WTC11 (cell line): ENCODE measurements at regions of chr15 and their contacts with region 1.

Region 1: GRCh38 chr15:98568382-98569017 is 79.8 kb upstream of the IGF1R start:
- DNase-seq: no peak
- ATAC-seq: no peak
- H3K4me3 Mint-ChIP-seq: no peak overlapping the region
- H3K27ac Mint-ChIP-seq: no peak overlapping the region
- H3K4me1 Mint-ChIP-seq: no peaks in the 10 kb centered on the region
- H3K27me3 Mint-ChIP-seq: no peaks in the 10 kb centered on the region
- CTCF ChIP-seq: no peak

Region 2: GRCh38 chr15:98548154-98548971 is 20.1 kb before region 1 on chr15:
- CTCF ChIA-PET with region 1: interaction called, 10 read pairs
- POLR2A ChIA-PET with region 1: no interaction called
- DNase-seq: peak; percentile 72
- ATAC-seq: peak; percentile 86
- H3K4me3 Mint-ChIP-seq: peak overlapping the region; percentile 78
- H3K27ac Mint-ChIP-seq: no peak overlapping the region
- H3K4me1 Mint-ChIP-seq: peaks cover 33% of the 10 kb centered on the region
- H3K27me3 Mint-ChIP-seq: peaks cover 46% of the 10 kb centered on the region
- CTCF ChIP-seq: no peak

Region 3: GRCh38 chr15:98581715-98582114 is 13.2 kb after region 1 on chr15:
- CTCF ChIA-PET with region 1: interaction called, 22 read pairs
- POLR2A ChIA-PET with region 1: interaction called, 3 read pairs
- DNase-seq: no peak
- ATAC-seq: peak; percentile 63
- H3K4me3 Mint-ChIP-seq: no peak overlapping the region
- H3K27ac Mint-ChIP-seq: no peak overlapping the region
- H3K4me1 Mint-ChIP-seq: peaks cover 20% of the 10 kb centered on the region
- H3K27me3 Mint-ChIP-seq: no peaks in the 10 kb centered on the region
- CTCF ChIP-seq: no peak